ENCODE measurements at regions of chr5 and their contacts with region 1.

Region 1: GRCh38 chr5:112386766-112387165 is 32.3 kb downstream of the EPB41L4A start:
- DNase-seq: no peak
- CTCF ChIP-seq: no peak

Region 2: DNA sequence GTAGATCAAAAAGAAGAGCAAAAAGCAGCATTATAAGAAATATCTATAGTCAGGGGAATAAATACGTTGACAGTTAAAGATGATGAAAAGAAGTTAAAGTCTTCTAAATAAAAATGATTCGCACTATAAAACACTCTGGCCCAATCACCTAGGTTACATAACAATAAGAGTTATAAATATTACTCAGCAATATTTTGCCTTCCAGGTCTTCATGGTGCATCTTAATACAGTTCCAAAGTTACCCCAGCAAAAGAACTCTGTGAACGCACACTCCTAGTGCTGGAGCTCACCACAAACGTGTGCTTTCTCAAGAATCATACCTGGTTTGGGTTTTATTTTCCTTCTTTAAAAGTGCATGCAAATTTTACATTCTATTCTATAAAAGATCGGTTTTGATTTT is 12.4 kb before region 1 on chr5:
- CTCF ChIA-PET with region 1: interaction called, 11 read pairs
- POLR2A ChIA-PET with region 1: no interaction called
- DNase-seq: no peak
- CTCF ChIP-seq: no peak

Region 3: GRCh38 chr5:112554101-112554977 is 167.6 kb after region 1 on chr5:
- CTCF ChIA-PET with region 1: no interaction called
- POLR2A ChIA-PET with region 1: no interaction called
- DNase-seq: no peak
- CTCF ChIP-seq: no peak